MCF 10A (cell line): ENCODE measurements at regions of chr19 and their contacts with region 1.

Region 1: GRCh38 chr19:43754503-43755255 is at the start of gene SMG9:
- DNase-seq: peak; percentile 98
- H3K4me3 Mint-ChIP-seq: peak within 1 kb of the TSS; percentile 93
- H3K27ac Mint-ChIP-seq: peak within 1 kb of the TSS; percentile 98
- H3K4me1 Mint-ChIP-seq: peaks cover 68% of the 10 kb centered on the region
- H3K27me3 Mint-ChIP-seq: no peaks in the 10 kb centered on the region
- CTCF ChIP-seq: no peak
- total RNA-seq, gene SMG9: 76.0 and 76.4 TPM in 2 replicates

Region 2: DNA sequence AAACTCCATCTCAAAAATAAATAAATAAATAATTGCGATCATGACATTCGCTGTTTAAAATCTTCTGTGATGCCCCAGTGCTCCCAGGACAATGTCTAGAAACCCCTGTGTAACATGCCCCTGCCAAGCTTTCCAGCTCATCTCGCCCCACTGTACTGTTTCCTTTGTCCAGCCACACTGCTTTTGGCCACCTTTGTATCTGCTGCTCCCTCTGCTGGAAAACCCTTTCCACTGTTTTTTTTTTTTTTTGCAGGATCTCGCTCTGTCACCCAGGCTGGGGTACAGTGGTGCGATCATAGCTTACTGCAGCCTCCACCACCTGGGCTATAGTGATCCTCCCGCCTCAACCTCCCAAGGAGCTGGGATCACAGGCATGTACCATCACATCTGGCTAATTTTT is 92.2 kb before region 1 on chr19:
- CTCF ChIA-PET with region 1: no interaction called
- POLR2A ChIA-PET with region 1: no interaction called
- intact Hi-C with region 1: no loop called
- DNase-seq: peak; percentile 40
- H3K4me3 Mint-ChIP-seq: no peak overlapping the region
- H3K27ac Mint-ChIP-seq: no peak overlapping the region
- H3K4me1 Mint-ChIP-seq: no peaks in the 10 kb centered on the region
- H3K27me3 Mint-ChIP-seq: no peaks in the 10 kb centered on the region
- CTCF ChIP-seq: peak; percentile 17

Region 3: DNA sequence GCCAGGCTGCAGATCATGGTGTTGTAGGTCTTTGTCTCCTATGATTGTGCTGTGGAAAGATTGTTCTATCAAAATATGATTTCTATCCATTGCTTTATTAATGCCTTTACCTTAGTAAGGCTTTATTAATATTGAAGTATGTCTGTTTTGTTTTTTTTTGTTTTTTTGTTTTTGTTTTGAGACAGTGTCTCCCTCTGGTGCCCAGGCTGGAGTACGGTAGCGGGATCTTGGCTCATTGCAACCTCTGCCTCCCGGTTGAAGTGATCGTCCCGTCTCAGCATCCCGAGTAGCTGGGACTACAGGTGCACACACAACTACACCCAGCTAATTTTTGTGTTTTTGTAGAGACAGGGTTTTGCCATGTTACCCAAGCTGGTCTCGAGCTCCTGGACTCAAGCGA is 31.1 kb before region 1 on chr19:
- CTCF ChIA-PET with region 1: no interaction called
- POLR2A ChIA-PET with region 1: interaction called, 5 read pairs
- intact Hi-C with region 1: loop called (anchors 1 kb)
- DNase-seq: peak; percentile 48
- H3K4me3 Mint-ChIP-seq: no peak overlapping the region
- H3K27ac Mint-ChIP-seq: no peak overlapping the region
- H3K4me1 Mint-ChIP-seq: peaks cover 6% of the 10 kb centered on the region
- H3K27me3 Mint-ChIP-seq: no peaks in the 10 kb centered on the region
- CTCF ChIP-seq: peak; percentile 35

Region 4: GRCh38 chr19:43784981-43785808 is 30.5 kb after region 1 on chr19:
- CTCF ChIA-PET with region 1: interaction called, 32 read pairs
- POLR2A ChIA-PET with region 1: interaction called, 409 read pairs
- intact Hi-C with region 1: loop called (anchors 1 kb)
- DNase-seq: peak; percentile 89
- H3K4me3 Mint-ChIP-seq: peak overlapping the region; percentile 86
- H3K27ac Mint-ChIP-seq: peak overlapping the region; percentile 90
- H3K4me1 Mint-ChIP-seq: peaks cover 63% of the 10 kb centered on the region
- H3K27me3 Mint-ChIP-seq: no peaks in the 10 kb centered on the region
- CTCF ChIP-seq: peak; percentile 92